Mammary epithelial cell (primary cell): ENCODE measurements at regions of chr1 and their contacts with region 1.

Region 1: GRCh38 chr1:77313491-77313890 is 31.7 kb downstream of the AK5 start:
- DNase-seq: no peak
- H3K4me3 ChIP-seq: no peak overlapping the region
- H3K27ac ChIP-seq: no peak overlapping the region
- H3K4me1 ChIP-seq: peaks cover 5% of the 10 kb centered on the region
- H3K27me3 ChIP-seq: no peaks in the 10 kb centered on the region
- CTCF ChIP-seq: peak; percentile 20 to 35

Region 2: DNA sequence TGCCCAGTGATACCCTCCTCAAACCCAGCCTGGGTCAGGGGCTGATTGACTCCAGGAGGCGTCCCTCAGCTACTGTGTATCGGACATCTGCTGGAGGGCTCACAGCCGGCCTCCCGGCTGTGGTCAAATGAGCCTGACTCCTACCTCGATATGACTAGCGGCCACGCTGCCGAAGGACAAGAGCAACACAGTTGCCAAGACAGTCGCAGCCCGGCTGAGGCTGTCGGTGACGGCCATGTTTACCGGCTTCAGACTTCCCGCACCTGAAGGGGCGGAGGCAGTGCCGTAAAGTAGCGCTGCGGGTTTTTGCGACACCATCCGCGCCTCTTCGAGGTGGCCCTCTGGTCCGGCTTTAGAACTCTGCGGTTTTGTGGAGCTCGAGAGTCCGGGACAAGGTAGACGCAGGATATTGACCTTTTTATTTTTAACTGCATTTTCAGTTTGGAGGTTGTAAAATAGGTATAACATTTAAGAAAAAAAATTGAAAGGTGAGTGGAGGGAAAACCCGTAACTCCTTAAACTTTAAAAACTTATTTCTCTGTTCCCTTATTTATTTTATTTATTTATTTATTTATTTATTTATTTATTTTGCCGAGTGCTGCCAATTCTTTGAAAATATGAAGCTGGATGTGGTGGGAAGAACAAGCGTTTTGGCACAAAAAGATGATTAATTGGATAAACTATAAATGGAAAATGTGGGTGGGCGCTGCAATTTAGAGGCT is 94.2 kb before region 1 on chr1 and contains the start of gene PIGK:
- CTCF ChIA-PET with region 1: no interaction called
- dilution Hi-C with region 1: no loop called
- in situ Hi-C with region 1: no loop called
- intact Hi-C with region 1: loop called (anchors 5 kb)
- DNase-seq: peak; percentile 86
- H3K4me3 ChIP-seq: peak within 1 kb of the TSS; percentile 65 to 72 (median 69)
- H3K27ac ChIP-seq: peak within 1 kb of the TSS; percentile 68
- H3K4me1 ChIP-seq: peaks cover 13% of the 10 kb centered on the region
- H3K27me3 ChIP-seq: no peaks in the 10 kb centered on the region
- CTCF ChIP-seq: peak in 1 of 2 donors; percentile 3
- total RNA-seq, gene PIGK: 19.8 to 21.7 TPM

Region 3: DNA sequence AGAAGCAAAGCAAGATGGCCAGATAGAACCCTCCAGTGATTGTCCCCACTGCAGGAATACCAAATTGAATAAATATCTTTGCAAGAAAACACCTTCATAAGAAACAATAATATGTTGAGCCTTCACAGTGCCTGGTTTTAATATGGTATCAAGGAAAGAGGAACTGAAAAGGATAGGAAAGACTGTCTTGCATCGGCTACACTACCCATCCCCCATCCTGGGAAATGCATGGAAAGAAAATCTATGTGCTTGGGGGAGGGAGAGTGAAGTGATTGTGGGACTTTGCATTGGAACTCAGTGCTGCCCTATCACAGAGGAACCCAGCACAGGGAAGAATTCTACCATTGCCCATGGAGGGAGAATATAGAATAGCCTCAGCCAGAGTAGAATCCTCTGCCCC is 60.3 kb before region 1 on chr1:
- CTCF ChIA-PET with region 1: no interaction called
- dilution Hi-C with region 1: no loop called
- in situ Hi-C with region 1: no loop called
- intact Hi-C with region 1: no loop called
- DNase-seq: no peak
- H3K4me3 ChIP-seq: no peak overlapping the region
- H3K27ac ChIP-seq: no peak overlapping the region
- H3K4me1 ChIP-seq: no peaks in the 10 kb centered on the region
- H3K27me3 ChIP-seq: peaks cover 2% of the 10 kb centered on the region
- CTCF ChIP-seq: no peak